Naive thymus-derived CD4-positive, alpha-beta T cell (primary cell): ENCODE measurements at regions of chr6 and their contacts with region 1.

Region 1: GRCh38 chr6:149565527-149566409 is at the start of gene GINM1:
- DNase-seq: peak; percentile 92 to 99 (median 96)
- ATAC-seq: peak; percentile 94
- H3K4me3 ChIP-seq: peak within 1 kb of the TSS; percentile 89
- H3K4me3 Mint-ChIP-seq: peak within 1 kb of the TSS; percentile 93 to 99 (median 97)
- H3K27ac ChIP-seq: peak within 1 kb of the TSS; percentile 95
- H3K27ac Mint-ChIP-seq: peak within 1 kb of the TSS; percentile 87 to 97 (median 97)
- H3K4me1 ChIP-seq: peaks cover 0 to 6% of the 10 kb centered on the region in 2 donors
- H3K4me1 Mint-ChIP-seq: peaks cover 3 to 39% (median 19%) of the 10 kb centered on the region in 7 donors
- H3K27me3 ChIP-seq: no peaks in the 10 kb centered on the region
- H3K27me3 Mint-ChIP-seq: peaks cover 0 to 7% (median 0%) of the 10 kb centered on the region in 5 donors
- total RNA-seq, gene GINM1: 14.4 to 27.3 (median 19.9) TPM

Region 2: GRCh38 chr6:149586149-149586548 is 20.4 kb after region 1 on chr6:
- CTCF ChIA-PET with region 1: no interaction called
- POLR2A ChIA-PET with region 1: no interaction called
- intact Hi-C with region 1: loop called in 1 of 2 experiments (anchors 2 kb)
- DNase-seq: no peak
- ATAC-seq: no peak
- H3K4me3 ChIP-seq: no peak overlapping the region
- H3K4me3 Mint-ChIP-seq: no peak overlapping the region
- H3K27ac ChIP-seq: no peak overlapping the region
- H3K27ac Mint-ChIP-seq: peak overlapping the region in 1 of 9 donors; percentile 28
- H3K4me1 ChIP-seq: no peaks in the 10 kb centered on the region
- H3K4me1 Mint-ChIP-seq: peaks cover 0 to 2% (median 0%) of the 10 kb centered on the region in 7 donors
- H3K27me3 ChIP-seq: no peaks in the 10 kb centered on the region
- H3K27me3 Mint-ChIP-seq: no peaks in the 10 kb centered on the region

Region 3: GRCh38 chr6:149660028-149660427 is 94.3 kb after region 1 on chr6:
- CTCF ChIA-PET with region 1: no interaction called
- POLR2A ChIA-PET with region 1: no interaction called
- intact Hi-C with region 1: loop called in 1 of 2 experiments (anchors 5 kb)
- DNase-seq: no peak
- ATAC-seq: no peak
- H3K4me3 ChIP-seq: no peak overlapping the region
- H3K4me3 Mint-ChIP-seq: peak overlapping the region in 1 of 10 donors; percentile 35
- H3K27ac ChIP-seq: no peak overlapping the region
- H3K27ac Mint-ChIP-seq: peak overlapping the region in 2 of 9 donors; percentile 6 to 23
- H3K4me1 ChIP-seq: no peaks in the 10 kb centered on the region
- H3K4me1 Mint-ChIP-seq: peaks cover 0 to 14% (median 0%) of the 10 kb centered on the region in 7 donors
- H3K27me3 ChIP-seq: no peaks in the 10 kb centered on the region
- H3K27me3 Mint-ChIP-seq: no peaks in the 10 kb centered on the region

Region 4: DNA sequence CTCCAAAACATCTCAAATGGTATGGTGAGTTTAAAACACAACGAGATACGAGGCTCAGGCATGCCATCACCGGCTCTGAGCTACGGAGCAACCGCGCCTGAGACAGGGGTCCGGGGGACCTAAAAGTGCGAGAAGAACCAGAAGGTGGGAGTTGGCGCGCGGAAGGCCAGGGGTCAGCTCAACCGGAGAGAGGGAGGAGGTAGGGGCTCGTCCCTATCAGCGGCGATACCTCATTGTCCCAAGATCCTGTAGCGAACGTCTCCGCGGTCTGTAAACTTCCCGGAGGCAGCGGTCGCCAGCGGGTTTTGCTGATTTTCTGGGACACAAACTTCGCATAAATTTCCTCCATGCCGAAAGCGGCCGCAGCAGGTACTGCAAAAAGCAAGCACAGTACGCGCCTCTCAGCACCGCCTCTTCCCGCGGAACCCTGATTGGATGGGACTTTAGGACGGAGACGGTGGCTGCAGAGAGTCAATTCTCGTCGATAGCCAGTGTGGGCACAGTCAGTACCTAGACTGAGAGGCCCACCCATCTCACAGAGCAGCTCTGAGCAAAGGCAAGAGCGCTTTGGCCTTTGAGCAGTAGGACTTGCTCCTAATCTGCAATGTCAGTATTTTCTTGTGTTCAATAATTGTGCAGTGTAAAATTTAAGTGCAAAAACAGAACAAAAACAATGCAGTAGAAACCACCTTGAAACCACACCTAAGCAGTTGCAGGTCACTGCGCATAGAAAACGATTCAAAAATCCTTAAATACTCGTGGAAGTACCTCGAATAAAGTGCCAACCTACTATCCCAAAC is 180.6 kb after region 1 on chr6 and contains the start of gene NUP43:
- CTCF ChIA-PET with region 1: no interaction called
- POLR2A ChIA-PET with region 1: no interaction called
- intact Hi-C with region 1: loop called (anchors 1 kb)
- DNase-seq: peak; percentile 75 to 91 (median 90)
- ATAC-seq: peak; percentile 80
- H3K4me3 ChIP-seq: peak within 1 kb of the TSS; percentile 77
- H3K4me3 Mint-ChIP-seq: peak within 1 kb of the TSS; percentile 93 to 99 (median 97)
- H3K27ac ChIP-seq: peak within 1 kb of the TSS; percentile 82
- H3K27ac Mint-ChIP-seq: peak within 1 kb of the TSS; percentile 86 to 97 (median 95)
- H3K4me1 ChIP-seq: peaks cover 17 to 26% of the 10 kb centered on the region in 2 donors
- H3K4me1 Mint-ChIP-seq: peaks cover 14 to 46% (median 32%) of the 10 kb centered on the region in 7 donors
- H3K27me3 ChIP-seq: no peaks in the 10 kb centered on the region
- H3K27me3 Mint-ChIP-seq: no peaks in the 10 kb centered on the region
- total RNA-seq, gene NUP43: 14.0 to 70.7 (median 60.2) TPM

Region 5: DNA sequence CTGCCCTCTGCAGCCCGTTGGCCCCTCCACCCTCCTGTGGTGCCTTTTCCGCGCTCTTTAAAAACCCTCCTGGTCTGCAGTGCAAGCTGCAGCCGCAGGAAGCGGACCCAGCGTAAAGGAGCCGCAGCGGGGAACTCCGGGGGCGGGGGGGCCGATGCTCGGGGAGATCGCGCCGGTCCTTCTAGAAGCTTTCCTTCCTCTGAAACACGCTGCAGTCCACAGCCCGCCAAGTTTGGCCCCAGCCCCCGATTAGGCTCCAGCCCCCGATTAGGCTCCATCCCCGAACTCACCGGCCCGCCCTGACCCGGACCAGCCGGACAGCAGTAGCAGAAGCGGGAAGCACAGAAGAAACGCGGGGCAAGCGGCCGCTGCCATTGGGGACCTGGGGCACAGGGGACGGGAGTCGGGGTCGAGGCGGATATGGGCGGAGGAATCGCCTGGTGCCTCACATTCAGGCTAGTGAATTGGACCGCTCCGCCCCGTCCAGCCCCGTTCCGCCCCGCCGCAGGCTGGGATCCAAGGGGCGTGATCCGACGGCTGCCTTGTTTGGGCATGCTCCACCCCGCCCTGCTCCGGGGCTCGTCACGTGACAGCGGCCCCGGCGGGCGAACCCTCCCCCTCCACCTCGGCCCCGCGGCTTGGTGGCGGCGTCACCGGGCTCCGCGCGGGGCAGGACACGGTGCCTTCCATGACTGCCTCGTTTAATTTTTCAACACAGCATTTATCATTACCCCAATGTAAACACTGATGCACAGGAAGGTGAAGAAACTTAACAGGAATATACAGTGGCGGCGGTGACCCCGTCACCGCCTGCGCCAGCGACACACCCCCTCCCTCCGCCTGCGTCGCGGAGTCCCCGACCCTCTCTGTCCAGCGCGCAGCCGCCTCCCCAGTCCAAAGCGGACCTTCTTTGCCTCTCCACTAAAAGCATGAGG is 439.3 kb after region 1 on chr6:
- CTCF ChIA-PET with region 1: no interaction called
- POLR2A ChIA-PET with region 1: no interaction called
- intact Hi-C with region 1: loop called in 1 of 2 experiments (anchors 2 kb)
- DNase-seq: peak; percentile 73 to 91 (median 82)
- ATAC-seq: peak; percentile 89
- H3K4me3 ChIP-seq: peak overlapping the region; percentile 87
- H3K4me3 Mint-ChIP-seq: peak overlapping the region; percentile 78 to 96 (median 91)
- H3K27ac ChIP-seq: peak overlapping the region; percentile 75
- H3K27ac Mint-ChIP-seq: peak overlapping the region; percentile 31 to 95 (median 85)
- H3K4me1 ChIP-seq: peaks cover 13 to 31% of the 10 kb centered on the region in 2 donors
- H3K4me1 Mint-ChIP-seq: peaks cover 7 to 56% (median 20%) of the 10 kb centered on the region in 7 donors
- H3K27me3 ChIP-seq: peaks cover 0 to 3% of the 10 kb centered on the region in 2 donors
- H3K27me3 Mint-ChIP-seq: peaks cover 15 to 35% (median 19%) of the 10 kb centered on the region in 5 donors